ENCODE measurements at regions of chr19 and their contacts with region 1.

Region 1: DNA sequence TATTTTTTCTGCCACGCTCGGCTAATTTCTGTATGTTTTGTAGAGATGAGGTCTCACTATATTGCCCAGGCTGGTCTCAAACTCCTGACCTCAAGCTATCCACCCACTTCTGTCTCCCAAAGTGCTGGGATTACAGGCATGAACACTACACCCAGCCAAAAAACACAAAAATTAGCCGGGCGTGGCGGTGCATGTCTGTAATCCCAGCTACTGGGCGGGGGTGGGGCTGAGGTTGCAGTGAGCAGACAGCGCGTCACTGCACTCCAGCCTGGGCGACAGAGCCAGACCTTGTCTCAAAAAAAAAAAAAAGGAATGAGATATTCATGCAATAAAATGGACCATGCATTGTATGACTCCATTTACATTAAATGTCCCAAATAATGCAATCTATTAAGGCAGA is 32.2 kb downstream of the VASP start:
- DNase-seq: no peak
- H3K4me3 ChIP-seq: no peak overlapping the region
- H3K27ac ChIP-seq: no peak overlapping the region
- H3K4me1 ChIP-seq: peaks cover 24% of the 10 kb centered on the region
- H3K27me3 ChIP-seq: no peaks in the 10 kb centered on the region
- CTCF ChIP-seq: no peak

Region 2: GRCh38 chr19:45515081-45515624 is 24.3 kb before region 1 on chr19:
- CTCF ChIA-PET with region 1: no interaction called
- POLR2A ChIA-PET with region 1: no interaction called
- intact Hi-C with region 1: no loop called
- DNase-seq: no peak
- H3K4me3 ChIP-seq: no peak overlapping the region
- H3K27ac ChIP-seq: no peak overlapping the region
- H3K4me1 ChIP-seq: peaks cover 38% of the 10 kb centered on the region
- H3K27me3 ChIP-seq: no peaks in the 10 kb centered on the region
- CTCF ChIP-seq: no peak

Region 3: DNA sequence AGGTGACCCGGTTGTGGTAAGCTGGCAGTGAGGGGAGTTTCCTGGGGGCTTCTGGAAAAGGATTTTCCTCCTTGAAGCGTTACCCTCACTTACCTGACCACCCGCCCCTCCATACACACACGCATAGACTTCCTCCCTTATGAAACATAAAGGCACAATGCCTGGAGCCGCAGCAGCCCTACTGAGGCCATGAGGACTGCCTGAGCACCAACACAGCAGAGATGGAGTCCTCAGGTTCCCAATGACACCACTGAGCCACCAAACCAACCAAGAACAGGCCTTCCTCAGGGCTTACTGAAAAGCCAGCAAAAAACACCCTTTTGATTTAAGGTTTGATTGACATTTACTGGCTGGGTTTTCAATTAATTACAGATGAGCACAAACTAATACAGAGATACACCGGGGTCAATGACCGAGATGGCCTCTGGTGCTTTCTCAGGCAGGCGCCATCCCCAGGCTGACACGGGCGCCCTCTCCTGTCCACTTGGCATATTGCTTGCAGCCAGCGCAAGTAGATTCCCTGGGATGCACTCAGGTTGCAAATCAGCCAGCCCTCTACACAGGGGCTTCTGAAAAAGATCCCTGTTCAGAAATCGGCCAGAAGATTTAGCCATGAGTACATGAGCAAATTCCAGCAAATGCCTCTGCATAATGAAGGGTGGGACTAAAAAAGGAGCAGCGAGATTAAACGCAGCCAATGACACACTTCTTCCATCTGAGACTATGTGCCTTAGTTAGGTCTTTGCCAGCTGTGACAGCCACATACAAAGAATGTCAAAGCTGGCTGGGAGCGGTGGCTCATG is 30.4 kb after region 1 on chr19:
- CTCF ChIA-PET with region 1: no interaction called
- POLR2A ChIA-PET with region 1: no interaction called
- intact Hi-C with region 1: no loop called
- DNase-seq: peak; percentile 38 to 67
- H3K4me3 ChIP-seq: no peak overlapping the region
- H3K27ac ChIP-seq: peak overlapping the region; percentile 75
- H3K4me1 ChIP-seq: peaks cover 41% of the 10 kb centered on the region
- H3K27me3 ChIP-seq: no peaks in the 10 kb centered on the region
- CTCF ChIP-seq: peak; percentile 93

Region 4: GRCh38 chr19:45598267-45599001 is 59.0 kb after region 1 on chr19:
- CTCF ChIA-PET with region 1: interaction called, 13 read pairs
- POLR2A ChIA-PET with region 1: no interaction called
- intact Hi-C with region 1: no loop called
- DNase-seq: peak in 1 of 2 experiments; percentile 6
- H3K4me3 ChIP-seq: no peak overlapping the region
- H3K27ac ChIP-seq: no peak overlapping the region
- H3K4me1 ChIP-seq: peaks cover 7% of the 10 kb centered on the region; the same call in 1 of the 2 replicates
- H3K27me3 ChIP-seq: peaks cover 56% of the 10 kb centered on the region
- CTCF ChIP-seq: no peak

Region 5: DNA sequence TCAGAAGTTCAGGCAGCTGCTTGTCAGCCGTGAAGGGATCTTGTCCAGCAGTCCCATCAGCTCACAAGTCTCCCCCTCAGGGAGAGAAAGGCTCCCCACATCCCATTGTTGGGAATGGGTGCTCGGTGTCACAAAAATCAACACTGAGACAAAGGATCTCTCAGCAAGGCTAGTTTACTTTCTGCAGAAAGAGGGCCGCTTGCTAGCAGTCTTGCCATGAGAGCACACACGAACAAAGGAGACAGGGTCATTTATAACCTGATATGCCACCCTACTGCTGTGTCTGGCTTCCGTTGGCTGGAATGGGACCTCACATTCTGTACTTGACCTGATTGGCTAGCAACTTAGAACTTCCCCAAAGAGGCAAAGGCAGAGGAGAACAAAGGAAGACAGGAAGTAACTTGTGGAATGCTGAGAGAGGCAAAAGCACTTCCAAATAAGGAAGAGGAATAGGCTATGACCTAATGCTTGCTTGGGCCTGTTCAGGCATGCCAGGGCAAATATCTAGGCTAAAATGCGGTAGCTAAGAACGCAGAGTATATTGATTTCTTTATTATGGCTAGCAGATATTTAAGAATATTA is 593.7 kb after region 1 on chr19:
- CTCF ChIA-PET with region 1: no interaction called
- POLR2A ChIA-PET with region 1: no interaction called
- intact Hi-C with region 1: no loop called
- DNase-seq: peak; percentile 70 to 85
- H3K4me3 ChIP-seq: no peak overlapping the region
- H3K27ac ChIP-seq: no peak overlapping the region
- H3K4me1 ChIP-seq: peaks cover 13% of the 10 kb centered on the region
- H3K27me3 ChIP-seq: no peaks in the 10 kb centered on the region
- CTCF ChIP-seq: no peak

Measured in PC-9 (cell line).